Common myeloid progenitor, CD34-positive (primary cell): ENCODE measurements at regions of chr22 and their contacts with region 1.

Region 1: GRCh38 chr22:24455751-24456426 is 28.5 kb downstream of the ADORA2A start:
- DNase-seq: no peak
- H3K4me3 ChIP-seq: no peak overlapping the region
- H3K27ac ChIP-seq: no peak overlapping the region
- H3K4me1 ChIP-seq: peaks cover 2 to 27% (median 20%) of the 10 kb centered on the region in 4 experiments
- H3K27me3 ChIP-seq: no peaks in the 10 kb centered on the region

Region 2: GRCh38 chr22:24474221-24474620 is 18.3 kb after region 1 on chr22:
- CTCF ChIA-PET with region 1: interaction called, 12 read pairs
- POLR2A ChIA-PET with region 1: interaction called, 4 read pairs
- DNase-seq: no peak
- H3K4me3 ChIP-seq: no peak overlapping the region
- H3K27ac ChIP-seq: no peak overlapping the region
- H3K4me1 ChIP-seq: peaks cover 0 to 2% (median 0%) of the 10 kb centered on the region in 4 experiments
- H3K27me3 ChIP-seq: no peaks in the 10 kb centered on the region

Region 3: DNA sequence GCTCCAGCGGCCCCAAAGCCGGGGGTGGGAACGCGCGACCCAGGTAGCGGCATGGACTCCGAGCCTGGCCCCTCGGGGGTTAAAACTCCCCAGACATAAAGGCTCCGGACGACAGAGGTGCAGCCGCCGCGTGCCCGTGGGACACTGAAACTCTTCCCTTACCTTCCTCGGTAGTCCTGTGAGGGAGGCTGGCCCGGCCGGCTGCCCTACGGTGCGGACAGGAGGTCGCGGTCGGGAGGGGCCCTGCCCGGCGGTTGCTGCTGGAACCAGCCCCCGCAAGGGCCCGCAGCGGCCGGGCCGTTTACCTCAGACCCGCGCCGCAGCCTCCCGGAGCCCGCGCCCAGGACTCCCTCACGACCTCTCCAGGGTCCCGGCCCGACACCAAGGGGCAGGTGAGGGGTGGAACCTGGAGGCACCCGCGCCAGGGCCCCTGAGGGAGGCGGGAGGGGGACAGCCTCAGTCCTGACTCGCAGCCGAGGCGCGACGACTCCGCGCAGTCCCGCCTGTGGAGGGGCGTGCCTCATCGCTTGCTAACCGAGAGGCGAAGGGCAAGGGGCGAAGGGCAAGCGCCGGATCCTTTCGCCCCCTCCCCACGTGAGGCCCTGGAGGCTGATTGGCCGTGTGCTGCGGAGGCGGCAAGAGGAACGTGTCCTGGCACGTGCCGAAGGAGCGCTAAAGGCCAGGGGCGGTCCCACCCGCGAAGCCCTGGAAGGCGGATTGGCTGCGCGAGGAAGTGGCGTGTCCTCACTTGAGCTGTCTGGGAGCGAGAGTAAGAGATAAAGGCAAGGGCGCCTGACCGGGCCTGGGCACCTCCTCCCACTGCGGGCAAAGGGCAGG is 38.9 kb after region 1 on chr22 and contains the start of gene UPB1:
- CTCF ChIA-PET with region 1: no interaction called
- POLR2A ChIA-PET with region 1: no interaction called
- DNase-seq: peak in 2 of 3 donors; percentile 73 to 80
- H3K4me3 ChIP-seq: peak within 1 kb of the TSS in 4 of 7 experiments; percentile 3 to 47 (median 30)
- H3K27ac ChIP-seq: no peak within 1 kb of the TSS
- H3K4me1 ChIP-seq: peaks cover 6 to 31% (median 21%) of the 10 kb centered on the region in 4 experiments
- H3K27me3 ChIP-seq: peaks cover 0 to 32% (median 18%) of the 10 kb centered on the region in 5 experiments